ENCODE measurements at regions of chr15 and their contacts with region 1.

Region 1: DNA sequence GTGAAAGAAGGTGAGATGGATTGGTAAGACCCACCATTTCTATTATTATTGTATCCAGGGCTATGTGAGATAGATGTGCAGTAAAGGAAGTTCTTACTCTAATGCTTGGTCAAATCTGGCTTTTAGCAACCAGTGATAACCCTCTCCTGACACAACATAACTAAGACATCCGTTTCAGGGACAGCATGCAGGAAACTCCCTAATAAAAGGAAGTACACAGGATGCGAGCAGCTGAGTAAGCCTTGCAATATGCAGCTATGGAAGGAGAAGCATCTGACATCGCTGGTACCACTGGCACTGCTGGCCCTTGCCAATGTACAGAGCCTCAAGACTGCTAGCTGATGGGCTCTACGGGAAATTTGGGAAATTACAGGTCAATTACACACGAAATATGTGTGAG is 662.3 kb downstream of the NR2F2 start:
- DNase-seq: peak; percentile 87
- H3K4me3 ChIP-seq: no peak overlapping the region
- H3K27ac ChIP-seq: peak overlapping the region; percentile 86
- H3K4me1 ChIP-seq: peaks cover 28% of the 10 kb centered on the region
- H3K27me3 ChIP-seq: no peaks in the 10 kb centered on the region
- CTCF ChIP-seq: no peak
- POLR2A ChIP-seq: peak; percentile 55

Region 2: GRCh38 chr15:96428742-96429141 is 564.1 kb before region 1 on chr15:
- CTCF ChIA-PET with region 1: no interaction called
- POLR2A ChIA-PET with region 1: no interaction called
- dilution Hi-C with region 1: no loop called
- intact Hi-C with region 1: loop called (anchors 10 kb)
- DNase-seq: peak; percentile 58
- H3K4me3 ChIP-seq: no peak overlapping the region
- H3K27ac ChIP-seq: peak overlapping the region; percentile 28
- H3K4me1 ChIP-seq: peaks cover 17% of the 10 kb centered on the region
- H3K27me3 ChIP-seq: no peaks in the 10 kb centered on the region
- CTCF ChIP-seq: no peak
- POLR2A ChIP-seq: no peak

Region 3: GRCh38 chr15:97026436-97027115 is 33.8 kb after region 1 on chr15:
- CTCF ChIA-PET with region 1: no interaction called
- POLR2A ChIA-PET with region 1: no interaction called
- dilution Hi-C with region 1: no loop called
- intact Hi-C with region 1: loop called (anchors 2 kb)
- DNase-seq: no peak
- H3K4me3 ChIP-seq: no peak overlapping the region
- H3K27ac ChIP-seq: no peak overlapping the region
- H3K4me1 ChIP-seq: no peaks in the 10 kb centered on the region
- H3K27me3 ChIP-seq: no peaks in the 10 kb centered on the region
- CTCF ChIP-seq: no peak
- POLR2A ChIP-seq: no peak

Region 4: GRCh38 chr15:97036301-97036700 is 43.5 kb after region 1 on chr15:
- CTCF ChIA-PET with region 1: no interaction called
- POLR2A ChIA-PET with region 1: no interaction called
- dilution Hi-C with region 1: no loop called
- intact Hi-C with region 1: loop called (anchors 1 kb)
- DNase-seq: peak; percentile 49
- H3K4me3 ChIP-seq: no peak overlapping the region
- H3K27ac ChIP-seq: no peak overlapping the region
- H3K4me1 ChIP-seq: peaks cover 13% of the 10 kb centered on the region
- H3K27me3 ChIP-seq: no peaks in the 10 kb centered on the region
- CTCF ChIP-seq: no peak
- POLR2A ChIP-seq: no peak

Measured in endothelial cell of umbilical vein (primary cell).